Caco-2 (cell line): ENCODE measurements at regions of chr4 and their contacts with region 1.

Region 1: GRCh38 chr4:44279066-44279465 is 169.5 kb downstream of the KCTD8 start:
- DNase-seq: no peak
- H3K4me3 ChIP-seq: no peak overlapping the region
- H3K4me3 Mint-ChIP-seq: no peak overlapping the region
- H3K27ac Mint-ChIP-seq: no peak overlapping the region
- H3K4me1 ChIP-seq: no peaks in the 10 kb centered on the region
- H3K4me1 Mint-ChIP-seq: no peaks in the 10 kb centered on the region
- H3K27me3 ChIP-seq: no peaks in the 10 kb centered on the region
- H3K27me3 Mint-ChIP-seq: no peaks in the 10 kb centered on the region
- CTCF ChIP-seq: no peak

Region 2: GRCh38 chr4:43651991-43652390 is 627.1 kb before region 1 on chr4:
- CTCF ChIA-PET with region 1: no interaction called
- POLR2A ChIA-PET with region 1: no interaction called
- intact Hi-C with region 1: loop called (anchors 5 kb)
- DNase-seq: no peak
- H3K4me3 ChIP-seq: no peak overlapping the region
- H3K4me3 Mint-ChIP-seq: no peak overlapping the region
- H3K27ac Mint-ChIP-seq: no peak overlapping the region
- H3K4me1 ChIP-seq: no peaks in the 10 kb centered on the region
- H3K4me1 Mint-ChIP-seq: no peaks in the 10 kb centered on the region
- H3K27me3 ChIP-seq: no peaks in the 10 kb centered on the region
- H3K27me3 Mint-ChIP-seq: peaks cover 2% of the 10 kb centered on the region
- CTCF ChIP-seq: no peak